ENCODE measurements at regions of chr1 and their contacts with region 1.

Region 1: DNA sequence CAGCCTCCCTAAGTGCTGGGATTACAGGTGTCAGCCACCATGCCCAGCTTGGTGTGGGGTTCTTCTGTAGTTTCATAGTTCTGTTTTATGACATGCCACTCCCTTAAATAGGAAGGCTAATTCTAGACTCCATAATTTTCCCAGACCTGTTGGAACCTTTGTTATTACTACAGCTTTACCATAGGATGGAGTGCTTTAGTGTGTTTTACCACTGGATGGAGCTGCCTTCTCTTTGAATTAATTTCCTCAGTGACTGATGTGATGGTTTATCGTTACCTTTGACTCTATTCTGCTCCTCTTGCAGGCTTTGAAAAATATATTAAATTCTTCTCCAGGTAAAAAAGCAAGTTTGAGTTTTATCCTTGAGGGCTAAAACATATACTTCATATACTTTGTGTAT is 84.6 kb upstream of the NEK7 start:
- DNase-seq: no peak
- ATAC-seq: no peak
- H3K4me3 ChIP-seq: no peak overlapping the region
- H3K27ac ChIP-seq: no peak overlapping the region
- H3K4me1 ChIP-seq: no peaks in the 10 kb centered on the region
- H3K27me3 ChIP-seq: no peaks in the 10 kb centered on the region
- CTCF ChIP-seq: peak in 1 of 2 donors; percentile 9

Region 2: DNA sequence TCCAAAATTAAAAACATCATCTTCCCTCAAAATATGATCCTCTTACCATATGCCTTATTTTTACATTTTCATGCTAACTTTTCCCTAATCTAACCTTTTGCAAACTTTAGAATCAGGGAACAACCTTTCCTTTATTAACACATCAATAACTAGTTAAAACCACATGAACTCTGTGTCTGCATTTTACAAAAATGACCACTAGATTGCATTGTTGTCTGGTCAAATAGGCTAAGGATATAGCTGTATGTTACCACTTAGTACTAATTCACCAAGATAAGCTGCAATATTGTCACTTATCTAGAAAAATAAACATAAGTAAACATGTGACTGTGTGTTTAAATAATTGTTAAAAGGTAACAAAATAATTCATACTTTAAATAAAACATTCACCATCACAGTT is 379.2 kb before region 1 on chr1:
- intact Hi-C with region 1: no loop called
- DNase-seq: no peak
- ATAC-seq: no peak
- H3K4me3 ChIP-seq: no peak overlapping the region
- H3K27ac ChIP-seq: no peak overlapping the region
- H3K4me1 ChIP-seq: no peaks in the 10 kb centered on the region
- H3K27me3 ChIP-seq: no peaks in the 10 kb centered on the region
- CTCF ChIP-seq: no peak

Region 3: DNA sequence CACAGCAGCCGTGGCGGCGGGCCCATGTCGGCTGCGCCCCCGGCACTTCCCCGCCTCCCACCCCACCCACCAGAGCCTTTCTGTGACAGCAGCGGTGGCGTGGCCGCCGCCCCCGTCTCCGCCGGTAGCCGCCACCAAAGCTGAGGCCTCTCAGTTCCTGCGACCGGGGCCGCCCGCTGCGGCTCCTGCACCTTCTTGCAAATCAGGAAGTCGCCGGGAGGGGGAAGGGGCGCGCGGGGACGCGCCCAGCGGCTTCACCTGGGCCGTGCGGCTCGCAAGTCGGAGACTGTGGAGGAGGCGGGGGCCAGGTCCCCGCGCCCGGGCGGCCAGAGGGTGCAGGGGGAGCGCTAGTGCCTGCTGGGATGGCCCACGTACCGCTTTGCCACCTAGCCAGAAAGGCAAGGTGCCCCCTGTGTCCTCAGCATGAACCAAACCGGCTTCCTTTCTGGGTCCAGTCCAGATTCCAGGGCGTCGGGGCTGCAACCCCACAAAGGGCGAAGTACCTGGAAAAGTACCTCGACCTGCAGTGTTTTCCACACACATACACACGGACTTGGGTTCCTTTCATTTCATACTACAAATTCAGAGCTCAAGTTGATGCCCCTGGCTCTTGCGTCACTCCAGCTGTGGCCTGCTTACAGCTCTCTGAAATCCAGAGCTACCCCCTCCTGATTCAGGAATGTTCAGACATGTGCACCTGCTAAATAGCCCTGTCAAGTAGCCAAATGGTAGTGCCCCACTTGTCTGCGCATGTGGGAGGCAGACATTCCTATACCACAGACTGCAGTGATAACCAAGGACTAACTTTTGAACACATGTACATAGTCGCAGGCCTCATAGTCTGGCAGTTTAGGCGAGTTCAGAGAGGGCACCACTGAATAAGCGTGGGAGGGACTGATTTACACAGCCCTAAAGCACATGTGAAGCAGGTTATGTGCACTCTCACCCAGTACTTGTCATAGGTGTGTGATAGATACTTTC is 296.6 kb before region 1 on chr1 and contains the start of gene DENND1B:
- intact Hi-C with region 1: no loop called
- DNase-seq: peak; percentile 63 to 98 (median 86)
- ATAC-seq: peak; percentile 82
- H3K4me3 ChIP-seq: peak within 1 kb of the TSS; percentile 69 to 71
- H3K27ac ChIP-seq: peak within 1 kb of the TSS; percentile 92 to 94
- H3K4me1 ChIP-seq: peaks cover 6 to 55% of the 10 kb centered on the region in 2 donors
- H3K27me3 ChIP-seq: no peaks in the 10 kb centered on the region
- CTCF ChIP-seq: peak in 1 of 2 donors; percentile 15
- polyA plus RNA-seq, gene DENND1B: 12.5 to 14.9 (median 12.9) TPM

Region 4: DNA sequence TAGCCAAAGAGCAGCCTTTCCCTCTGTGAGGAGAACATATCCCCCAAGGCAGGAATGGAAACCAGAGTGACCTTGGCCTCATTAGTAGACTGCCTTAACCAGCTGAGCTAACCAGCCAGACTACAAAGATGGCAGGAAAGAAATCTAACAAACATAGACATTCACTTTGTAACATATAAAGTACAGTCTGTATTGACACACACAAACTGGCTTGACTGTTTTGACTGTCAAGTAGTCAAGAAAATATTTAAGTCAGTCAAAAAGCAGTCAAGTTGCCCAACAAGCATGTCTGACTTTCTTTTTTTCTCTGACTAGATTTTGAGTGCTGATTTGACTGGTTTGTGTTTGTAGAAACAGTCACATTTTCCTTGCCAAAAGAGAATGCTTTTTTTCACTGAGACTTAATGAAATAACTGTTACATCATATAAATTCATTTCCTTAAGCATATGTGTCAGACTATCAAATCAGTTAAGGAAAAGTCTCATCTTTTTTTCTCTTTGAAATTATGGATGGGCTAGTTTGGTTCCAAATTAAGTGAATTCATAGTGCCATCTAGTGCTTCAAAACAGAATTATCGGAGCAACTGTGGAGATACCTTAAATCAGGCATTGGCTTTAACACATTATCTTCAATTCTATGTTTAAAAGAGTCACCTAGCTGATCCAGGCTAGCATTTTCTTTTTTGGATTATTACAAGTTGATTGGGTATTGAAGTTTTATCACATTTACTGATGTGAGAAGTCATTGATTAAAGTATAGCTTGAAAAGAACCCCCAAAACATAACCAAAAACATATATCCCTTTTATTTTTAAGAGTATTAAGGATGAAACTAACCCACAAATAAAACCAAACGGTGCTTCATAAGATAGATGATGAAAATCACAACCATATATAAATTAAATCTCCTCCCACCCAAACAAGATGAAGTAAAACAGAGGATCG is 393.3 kb after region 1 on chr1:
- intact Hi-C with region 1: loop called in 1 of 2 experiments (anchors 10 kb)
- DNase-seq: peak in 2 of 4 donors; percentile 45 to 59
- ATAC-seq: peak; percentile 93
- H3K4me3 ChIP-seq: no peak overlapping the region
- H3K27ac ChIP-seq: peak overlapping the region in 1 of 2 donors; percentile 49
- H3K4me1 ChIP-seq: no peaks in the 10 kb centered on the region
- H3K27me3 ChIP-seq: no peaks in the 10 kb centered on the region
- CTCF ChIP-seq: peak; percentile 56 to 59